B cell (primary cell): ENCODE measurements at regions of chr10 and their contacts with region 1.

Region 1: DNA sequence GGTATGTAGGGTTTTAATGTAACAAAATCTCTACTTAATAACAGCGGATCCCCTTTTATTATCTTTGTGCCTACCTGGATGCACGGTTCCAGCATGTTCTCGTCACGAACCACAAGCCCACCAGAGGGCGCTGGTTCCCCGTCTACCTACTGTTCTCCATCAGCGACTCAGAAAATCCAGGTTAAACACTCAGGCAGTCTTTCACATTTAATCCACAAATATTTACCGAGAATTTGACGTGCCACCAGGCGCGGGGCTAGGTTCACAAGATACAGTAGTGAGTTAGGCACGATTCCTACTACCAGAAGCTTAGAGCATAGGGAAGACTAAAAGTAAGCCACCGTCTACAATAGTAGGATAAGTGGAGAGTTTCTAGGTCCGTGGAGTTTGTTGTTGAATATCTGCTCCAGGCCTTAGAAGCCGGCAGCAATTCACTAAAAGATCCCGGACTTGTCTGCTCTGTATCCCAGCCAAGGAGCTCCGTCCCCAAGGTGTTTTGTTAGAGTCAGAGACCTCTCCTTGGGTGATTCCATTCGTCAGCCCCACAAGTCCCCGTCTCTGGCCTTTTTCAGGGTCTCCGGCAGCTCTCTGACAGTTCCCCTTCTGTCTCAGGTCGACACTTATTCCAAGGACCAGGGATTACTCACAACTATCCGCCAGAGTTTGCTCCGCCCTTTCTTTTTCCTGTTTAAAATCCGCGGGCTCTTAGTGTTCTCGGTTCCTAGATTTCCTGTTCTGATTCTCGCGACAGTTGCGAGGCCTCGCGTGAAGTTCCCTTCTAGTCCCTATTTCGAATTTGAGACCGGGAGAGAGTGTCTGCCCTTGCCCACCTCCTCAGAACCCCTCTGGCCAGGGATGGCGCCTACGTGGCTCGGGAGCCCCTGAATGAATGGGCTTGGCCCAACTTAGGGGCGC is 1.5 kb upstream of the KAZALD1 start:
- DNase-seq: peak; percentile 97
- ATAC-seq: peak; percentile 56
- H3K4me3 ChIP-seq: peak overlapping the region; percentile 93 to 100 (median 97)
- H3K4me3 Mint-ChIP-seq: peak overlapping the region; percentile 97
- H3K27ac ChIP-seq: peak overlapping the region; percentile 79 to 85
- H3K27ac Mint-ChIP-seq: peak overlapping the region; percentile 94
- H3K4me1 ChIP-seq: peaks cover 32 to 40% of the 10 kb centered on the region in 2 donors
- H3K4me1 Mint-ChIP-seq: peaks cover 36% of the 10 kb centered on the region
- H3K27me3 ChIP-seq: peaks cover 0 to 29% (median 10%) of the 10 kb centered on the region in 4 experiments
- H3K27me3 Mint-ChIP-seq: peaks cover 15% of the 10 kb centered on the region
- CTCF ChIP-seq: peak; percentile 97

Region 2: DNA sequence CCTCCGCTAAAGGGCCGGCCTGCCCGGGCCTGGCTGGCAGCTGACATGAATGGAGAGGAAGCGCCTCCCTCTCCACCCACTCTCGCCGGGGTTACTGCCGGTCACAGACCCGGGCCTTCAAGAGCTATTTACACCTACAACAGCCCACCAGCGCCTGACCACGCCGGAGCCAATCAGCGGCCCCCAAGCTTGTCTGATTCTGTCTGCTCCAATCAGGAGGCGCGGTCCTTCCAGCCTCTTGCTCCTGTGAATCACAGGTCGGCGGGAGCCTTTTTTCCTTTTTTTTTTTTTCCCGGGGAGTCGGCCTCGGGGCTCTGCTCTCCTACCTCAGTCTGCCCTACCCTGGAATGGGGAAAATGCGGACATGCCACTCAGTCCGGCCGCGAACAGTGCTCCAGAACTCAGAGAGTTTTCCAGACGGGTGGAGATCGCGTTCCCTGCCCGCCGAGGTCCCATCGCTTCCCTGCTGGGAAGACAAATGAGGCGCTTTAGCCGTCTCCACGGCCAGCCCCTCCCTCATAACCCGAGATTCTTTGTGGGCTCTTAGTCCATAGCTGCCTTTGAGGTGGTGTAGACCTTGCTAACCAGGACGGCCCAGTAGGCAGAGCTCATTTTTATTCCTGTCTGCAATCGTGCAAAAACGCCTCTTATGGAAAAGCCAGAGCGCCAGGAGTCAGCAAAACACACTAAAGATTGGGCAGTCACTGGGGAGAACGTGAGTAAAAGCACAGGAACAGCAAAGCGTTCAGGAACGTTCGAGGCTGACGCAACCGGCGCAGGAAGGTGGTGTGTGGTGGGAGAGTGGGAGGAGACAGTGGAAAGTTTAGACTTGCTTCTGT is 686.8 kb before region 1 on chr10:
- CTCF ChIA-PET with region 1: no interaction called
- POLR2A ChIA-PET with region 1: no interaction called
- intact Hi-C with region 1: no loop called
- DNase-seq: peak; percentile 87
- ATAC-seq: peak; percentile 97
- H3K4me3 ChIP-seq: peak overlapping the region; percentile 57 to 82 (median 81)
- H3K4me3 Mint-ChIP-seq: no peak overlapping the region
- H3K27ac ChIP-seq: peak overlapping the region; percentile 83 to 91
- H3K27ac Mint-ChIP-seq: no peak overlapping the region
- H3K4me1 ChIP-seq: peaks cover 32 to 52% of the 10 kb centered on the region in 2 donors
- H3K4me1 Mint-ChIP-seq: peaks cover 26% of the 10 kb centered on the region
- H3K27me3 ChIP-seq: peaks cover 0 to 2% (median 0%) of the 10 kb centered on the region in 4 experiments
- H3K27me3 Mint-ChIP-seq: no peaks in the 10 kb centered on the region
- CTCF ChIP-seq: no peak

Region 3: DNA sequence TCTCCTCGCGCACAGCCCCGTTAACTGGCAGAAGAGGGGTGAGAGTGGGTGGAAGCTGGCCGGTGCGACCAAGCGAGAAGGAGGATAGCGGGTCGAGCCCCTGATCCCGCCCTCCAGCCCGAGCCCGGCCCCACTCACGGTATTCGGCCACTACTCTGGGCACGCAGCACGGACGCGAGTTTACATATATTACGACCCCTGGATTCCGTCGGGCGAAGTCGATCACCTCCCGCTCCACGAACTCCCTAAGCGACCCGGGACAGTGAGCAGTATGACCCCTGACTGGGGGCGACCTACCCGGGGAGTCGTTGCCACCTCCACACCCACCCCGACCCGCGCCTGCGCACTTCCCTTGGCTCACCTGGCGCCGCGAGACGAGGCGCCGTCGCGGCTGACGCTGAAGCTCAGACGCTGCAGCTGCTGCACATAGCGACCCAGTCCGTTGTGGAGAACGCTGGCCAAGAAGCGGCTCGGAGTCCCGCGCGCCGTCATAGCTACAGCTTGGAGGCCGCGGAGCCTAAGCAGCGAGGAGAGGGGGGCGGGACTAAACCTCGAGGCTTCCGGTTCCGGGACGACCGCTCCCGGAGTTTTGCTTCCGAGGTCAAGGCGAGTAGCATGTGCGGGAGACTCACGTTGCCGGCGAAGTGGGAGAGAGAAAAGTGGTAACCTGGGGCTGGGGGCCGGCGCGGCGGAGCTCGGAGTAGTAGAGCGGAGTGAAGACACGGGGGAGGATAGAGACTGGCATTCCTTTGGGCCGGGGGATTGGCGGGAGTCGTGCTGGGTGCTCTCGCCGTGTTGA is 73.1 kb before region 1 on chr10 and contains the starts of genes MRPL43 and TWNK:
- CTCF ChIA-PET with region 1: interaction called, 4 read pairs
- POLR2A ChIA-PET with region 1: no interaction called
- intact Hi-C with region 1: loop called (anchors 1 kb)
- DNase-seq: peak; percentile 91
- ATAC-seq: peak; percentile 93
- H3K4me3 ChIP-seq: peak within 1 kb of the TSS; percentile 68 to 95 (median 94)
- H3K4me3 Mint-ChIP-seq: peak within 1 kb of the TSS; percentile 97
- H3K27ac ChIP-seq: peak within 1 kb of the TSS; percentile 15 to 51
- H3K27ac Mint-ChIP-seq: peak within 1 kb of the TSS; percentile 84
- H3K4me1 ChIP-seq: peaks cover 18 to 28% of the 10 kb centered on the region in 2 donors
- H3K4me1 Mint-ChIP-seq: peaks cover 36% of the 10 kb centered on the region
- H3K27me3 ChIP-seq: no peaks in the 10 kb centered on the region
- H3K27me3 Mint-ChIP-seq: no peaks in the 10 kb centered on the region
- CTCF ChIP-seq: no peak
- total RNA-seq, gene MRPL43: 56.2 and 57.8 TPM in 2 replicates
- total RNA-seq, gene TWNK: 11.8 and 12.0 TPM in 2 replicates

Region 4: DNA sequence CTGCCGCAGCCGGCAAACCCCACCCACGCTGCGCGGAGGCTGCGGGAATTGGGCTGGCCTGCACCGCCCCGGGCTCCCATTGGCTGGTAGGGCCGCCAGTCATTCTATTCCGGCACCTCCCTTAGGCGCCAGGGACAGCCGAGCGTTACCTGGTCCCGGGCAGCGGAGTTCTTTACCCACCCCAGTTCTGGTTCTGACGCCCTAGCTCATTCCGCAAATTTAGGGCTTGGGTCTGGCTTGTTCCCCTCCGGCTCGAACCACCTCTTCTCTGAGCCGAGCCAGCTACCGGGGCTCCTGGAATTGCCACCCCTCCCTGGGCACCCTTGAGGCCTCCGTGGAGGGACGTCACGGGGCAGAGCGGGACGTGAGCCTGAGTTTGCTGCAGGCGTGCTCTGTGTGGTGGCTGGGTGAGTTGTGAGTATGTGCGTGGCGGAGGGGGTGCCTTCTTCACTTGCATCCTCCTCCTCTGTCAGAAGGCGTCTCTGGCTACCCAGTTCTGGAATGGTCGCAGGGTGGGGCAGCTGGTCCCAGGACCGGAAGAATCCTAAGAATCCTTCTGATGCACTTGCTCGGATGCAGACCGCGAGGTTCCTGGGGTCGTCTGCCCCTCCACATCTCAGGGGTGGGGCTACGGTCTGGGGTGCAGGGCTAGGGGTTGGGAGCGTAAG is 29.0 kb before region 1 on chr10 and contains the starts of genes PDZD7 and SFXN3:
- CTCF ChIA-PET with region 1: interaction called, 10 read pairs
- POLR2A ChIA-PET with region 1: interaction called, 6 read pairs
- intact Hi-C with region 1: loop called (anchors 1 kb)
- DNase-seq: peak; percentile 95
- ATAC-seq: peak; percentile 89
- H3K4me3 ChIP-seq: peak within 1 kb of the TSS; percentile 26 to 96 (median 79)
- H3K4me3 Mint-ChIP-seq: peak within 1 kb of the TSS; percentile 88
- H3K27ac ChIP-seq: peak within 1 kb of the TSS; percentile 63 to 65
- H3K27ac Mint-ChIP-seq: peak within 1 kb of the TSS; percentile 90
- H3K4me1 ChIP-seq: peaks cover 14 to 26% of the 10 kb centered on the region in 2 donors
- H3K4me1 Mint-ChIP-seq: peaks cover 19% of the 10 kb centered on the region
- H3K27me3 ChIP-seq: peaks cover 0 to 29% (median 13%) of the 10 kb centered on the region in 4 experiments
- H3K27me3 Mint-ChIP-seq: peaks cover 15% of the 10 kb centered on the region
- CTCF ChIP-seq: no peak
- total RNA-seq, gene PDZD7: 0.69 and 0.85 TPM in 2 replicates
- total RNA-seq, gene SFXN3: 38.0 and 44.2 TPM in 2 replicates

Region 5: DNA sequence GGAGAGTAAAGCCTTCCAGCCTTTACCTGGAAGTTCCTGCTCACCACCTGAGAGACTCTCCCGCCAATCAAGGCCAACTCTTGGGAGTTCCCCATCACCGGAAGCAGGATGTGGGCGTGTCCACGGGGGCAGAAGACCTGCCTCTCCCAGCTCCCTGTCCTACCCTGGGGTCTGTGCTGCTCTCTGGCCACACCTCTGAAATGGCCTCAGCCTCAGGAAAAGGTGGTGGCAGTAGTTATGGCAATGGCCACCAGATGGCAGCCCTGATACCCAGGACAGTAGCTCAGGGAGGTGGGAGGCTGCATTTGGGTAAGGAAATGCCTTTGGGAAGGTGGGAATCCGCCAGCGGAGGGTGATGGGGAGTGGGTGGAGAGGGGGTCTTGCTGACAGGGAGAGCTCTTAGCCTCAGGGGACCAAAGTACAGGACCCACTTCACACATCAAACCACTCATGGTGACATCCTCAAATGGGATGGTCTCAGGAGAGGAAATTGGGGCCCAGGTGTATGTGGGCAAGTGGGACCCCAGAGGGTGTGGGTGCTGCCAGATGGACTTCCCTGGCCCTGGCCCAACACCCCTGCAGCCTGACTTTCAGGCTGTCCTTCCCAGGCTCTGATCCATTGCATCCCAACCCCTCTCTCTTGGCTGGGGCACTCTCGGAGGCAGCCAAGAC is 35.4 kb after region 1 on chr10:
- CTCF ChIA-PET with region 1: interaction called, 10 read pairs
- POLR2A ChIA-PET with region 1: no interaction called
- intact Hi-C with region 1: no loop called
- DNase-seq: peak; percentile 76
- ATAC-seq: peak; percentile 92
- H3K4me3 ChIP-seq: no peak overlapping the region
- H3K4me3 Mint-ChIP-seq: no peak overlapping the region
- H3K27ac ChIP-seq: no peak overlapping the region
- H3K27ac Mint-ChIP-seq: no peak overlapping the region
- H3K4me1 ChIP-seq: no peaks in the 10 kb centered on the region
- H3K4me1 Mint-ChIP-seq: peaks cover 2% of the 10 kb centered on the region
- H3K27me3 ChIP-seq: peaks cover 0 to 83% (median 10%) of the 10 kb centered on the region in 4 experiments
- H3K27me3 Mint-ChIP-seq: peaks cover 58% of the 10 kb centered on the region
- CTCF ChIP-seq: peak; percentile 87

Region 6: GRCh38 chr10:101141616-101142532 is 81.6 kb after region 1 on chr10:
- CTCF ChIA-PET with region 1: interaction called, 90 read pairs
- POLR2A ChIA-PET with region 1: interaction called, 3 read pairs
- intact Hi-C with region 1: loop called (anchors 1 kb)
- DNase-seq: peak; percentile 88
- ATAC-seq: peak; percentile 88
- H3K4me3 ChIP-seq: no peak overlapping the region
- H3K4me3 Mint-ChIP-seq: no peak overlapping the region
- H3K27ac ChIP-seq: no peak overlapping the region
- H3K27ac Mint-ChIP-seq: no peak overlapping the region
- H3K4me1 ChIP-seq: peaks cover 34 to 46% of the 10 kb centered on the region in 2 donors
- H3K4me1 Mint-ChIP-seq: peaks cover 24% of the 10 kb centered on the region
- H3K27me3 ChIP-seq: peaks cover 0 to 92% (median 68%) of the 10 kb centered on the region in 4 experiments
- H3K27me3 Mint-ChIP-seq: peaks cover 73% of the 10 kb centered on the region
- CTCF ChIP-seq: peak; percentile 98

Region 7: DNA sequence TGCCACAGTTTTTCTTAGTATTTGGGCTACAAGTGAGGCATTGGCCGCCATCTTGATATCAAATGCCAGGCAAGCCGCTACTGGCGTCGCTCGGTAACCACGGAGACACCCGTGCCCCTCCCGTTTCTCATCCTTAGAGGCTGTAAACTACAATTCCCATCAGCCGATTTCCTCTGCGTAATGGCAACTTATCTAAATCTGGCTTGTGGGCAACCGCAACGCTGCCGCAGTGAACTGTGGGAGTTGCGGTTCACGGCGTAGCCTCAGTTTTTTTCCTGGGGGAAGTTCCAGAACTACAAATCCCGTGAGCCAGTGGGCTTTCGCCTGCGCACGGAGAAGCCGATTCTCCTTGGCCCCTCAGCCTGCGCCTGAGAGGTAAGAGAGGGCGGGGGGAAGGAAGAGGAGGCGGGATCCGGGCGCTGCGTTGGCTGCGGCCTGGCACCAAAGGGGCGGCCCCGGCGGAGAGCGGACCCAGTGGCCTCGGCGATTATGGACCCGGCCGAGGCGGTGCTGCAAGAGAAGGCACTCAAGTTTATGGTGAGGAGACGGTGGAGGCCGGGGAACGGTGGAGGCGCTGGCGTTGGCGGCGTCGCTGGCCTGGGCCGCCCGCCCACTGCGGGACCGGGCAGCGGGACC is 293.5 kb after region 1 on chr10 and contains the start of gene BTRC:
- CTCF ChIA-PET with region 1: no interaction called
- POLR2A ChIA-PET with region 1: interaction called, 3 read pairs
- intact Hi-C with region 1: loop called (anchors 2 kb)
- DNase-seq: peak; percentile 99
- ATAC-seq: peak; percentile 96
- H3K4me3 ChIP-seq: peak within 1 kb of the TSS; percentile 63 to 87 (median 79)
- H3K4me3 Mint-ChIP-seq: peak within 1 kb of the TSS; percentile 94
- H3K27ac ChIP-seq: peak within 1 kb of the TSS; percentile 42 to 88
- H3K27ac Mint-ChIP-seq: peak within 1 kb of the TSS; percentile 99
- H3K4me1 ChIP-seq: peaks cover 11 to 13% of the 10 kb centered on the region in 2 donors
- H3K4me1 Mint-ChIP-seq: peaks cover 22% of the 10 kb centered on the region
- H3K27me3 ChIP-seq: peaks cover 0 to 15% (median 2%) of the 10 kb centered on the region in 4 experiments
- H3K27me3 Mint-ChIP-seq: peaks cover 20% of the 10 kb centered on the region
- CTCF ChIP-seq: no peak
- total RNA-seq, gene BTRC: 20.1 and 21.9 TPM in 2 replicates